Left lung (tissue), 14 donors: ENCODE measurements at regions of chr3 and their contacts with region 1.

Region 1: DNA sequence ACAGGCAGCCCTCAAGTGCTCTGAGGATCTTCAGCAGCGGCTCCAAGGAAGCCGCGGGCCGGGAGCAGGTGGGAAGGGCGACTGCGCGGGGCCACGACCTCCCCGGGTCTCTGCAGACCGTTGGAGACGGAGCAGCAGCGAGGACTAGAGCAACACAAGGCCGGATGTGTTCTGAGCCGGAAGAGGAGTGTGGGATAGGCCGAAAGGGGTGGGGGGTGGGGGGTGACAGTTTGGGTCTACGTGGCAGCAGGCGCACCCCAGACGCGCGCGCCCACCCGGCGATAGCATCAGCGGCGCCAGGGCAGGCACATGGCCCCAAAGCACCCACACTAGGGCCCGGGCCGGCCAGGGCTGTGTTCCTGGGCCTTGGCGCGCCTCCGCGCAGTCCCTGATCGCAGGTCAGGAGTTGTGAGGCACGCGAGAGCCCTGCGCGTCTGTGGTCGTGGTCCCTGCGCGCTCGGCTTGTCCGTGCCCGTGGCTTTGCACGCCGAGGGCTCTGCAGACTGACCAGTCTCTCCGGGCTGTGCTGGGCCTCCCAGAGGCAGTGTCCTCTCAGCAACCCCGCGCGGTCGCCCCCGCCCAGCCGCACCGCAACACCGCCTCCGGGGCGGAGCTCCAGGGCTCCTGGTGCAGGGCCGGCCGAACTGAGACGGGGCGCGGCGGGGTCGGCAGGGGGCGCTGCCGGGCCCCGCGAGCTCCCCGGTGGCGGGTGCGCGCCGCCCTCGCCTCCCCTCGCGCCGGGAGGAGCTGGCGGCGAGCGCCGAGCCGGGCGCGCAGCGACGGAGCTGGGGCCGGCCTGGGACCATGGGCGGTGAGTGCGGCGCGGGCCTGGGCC is at the start of gene PXYLP1:
- DNase-seq: peak; percentile 87 to 100 (median 95)
- ATAC-seq: peak; percentile 96
- H3K4me3 ChIP-seq: peak within 1 kb of the TSS; percentile 74 to 90
- H3K27ac ChIP-seq: peak within 1 kb of the TSS; percentile 81 to 89
- H3K4me1 ChIP-seq: peaks cover 0 to 32% of the 10 kb centered on the region in 2 donors
- H3K27me3 ChIP-seq: no peaks in the 10 kb centered on the region
- CTCF ChIP-seq: peak; percentile 41 to 79
- polyA plus RNA-seq, gene PXYLP1: 27.3 to 35.3 (median 28.8) TPM

Region 2: DNA sequence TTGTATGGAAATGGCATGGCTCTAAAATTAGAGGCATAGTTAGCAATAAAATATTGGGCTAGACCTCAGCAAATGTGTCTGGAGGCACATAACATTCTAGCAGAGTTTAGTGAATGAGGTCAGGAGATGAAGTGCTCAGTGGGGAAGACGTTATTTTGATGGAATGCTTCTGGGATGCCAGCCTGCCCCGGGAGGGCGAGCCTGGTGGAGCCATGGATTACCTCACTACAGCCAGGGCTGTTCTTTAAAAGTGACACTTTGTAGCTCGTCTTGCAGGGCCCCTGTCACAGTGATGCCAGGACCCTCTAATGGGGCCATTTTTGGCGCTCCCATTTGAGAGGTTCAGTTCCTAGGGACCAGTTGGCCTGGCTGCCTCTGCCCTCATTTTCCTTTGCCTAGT is 48.8 kb after region 1 on chr3:
- intact Hi-C with region 1: loop called in 1 of 2 experiments (anchors 10 kb)
- DNase-seq: no peak
- ATAC-seq: no peak
- H3K4me3 ChIP-seq: no peak overlapping the region
- H3K27ac ChIP-seq: no peak overlapping the region
- H3K4me1 ChIP-seq: peaks cover 3 to 30% of the 10 kb centered on the region in 2 donors
- H3K27me3 ChIP-seq: no peaks in the 10 kb centered on the region
- CTCF ChIP-seq: no peak